Activated T-helper 1 cell treated with anti-CD3 and anti-CD28 coated beads, Interleukin-12 subunit alpha, Interleukin-12 subunit beta, Interleukin-2, Interleukin-4 antibody, amounts not matched to agents 30 ng/mL and 10 ng/mL and 1 ng/mL, durations not matched to agents 14 hours and 24 hours and 36 hours (primary cell): ENCODE measurements at regions of chr17 and their contacts with region 1.

Region 1: GRCh38 chr17:41918314-41919164 is at the start of gene ACLY:
- DNase-seq: peak; percentile 98
- H3K4me3 Mint-ChIP-seq: peak within 1 kb of the TSS; percentile 95
- H3K27ac Mint-ChIP-seq: peak within 1 kb of the TSS; percentile 90
- H3K4me1 Mint-ChIP-seq: peaks cover 32% of the 10 kb centered on the region
- H3K27me3 Mint-ChIP-seq: no peaks in the 10 kb centered on the region
- total RNA-seq, gene ACLY: 200 and 211 TPM in 2 replicates

Region 2: GRCh38 chr17:41688699-41689496 is 229.6 kb before region 1 on chr17 and contains the start of gene EIF1:
- intact Hi-C with region 1: loop called (anchors 2 kb)
- DNase-seq: peak; percentile 100
- H3K4me3 Mint-ChIP-seq: peak within 1 kb of the TSS; percentile 96
- H3K27ac Mint-ChIP-seq: peak within 1 kb of the TSS; percentile 96
- H3K4me1 Mint-ChIP-seq: peaks cover 29% of the 10 kb centered on the region
- H3K27me3 Mint-ChIP-seq: peaks cover 3% of the 10 kb centered on the region
- total RNA-seq, gene EIF1: 876 and 893 TPM in 2 replicates

Region 3: DNA sequence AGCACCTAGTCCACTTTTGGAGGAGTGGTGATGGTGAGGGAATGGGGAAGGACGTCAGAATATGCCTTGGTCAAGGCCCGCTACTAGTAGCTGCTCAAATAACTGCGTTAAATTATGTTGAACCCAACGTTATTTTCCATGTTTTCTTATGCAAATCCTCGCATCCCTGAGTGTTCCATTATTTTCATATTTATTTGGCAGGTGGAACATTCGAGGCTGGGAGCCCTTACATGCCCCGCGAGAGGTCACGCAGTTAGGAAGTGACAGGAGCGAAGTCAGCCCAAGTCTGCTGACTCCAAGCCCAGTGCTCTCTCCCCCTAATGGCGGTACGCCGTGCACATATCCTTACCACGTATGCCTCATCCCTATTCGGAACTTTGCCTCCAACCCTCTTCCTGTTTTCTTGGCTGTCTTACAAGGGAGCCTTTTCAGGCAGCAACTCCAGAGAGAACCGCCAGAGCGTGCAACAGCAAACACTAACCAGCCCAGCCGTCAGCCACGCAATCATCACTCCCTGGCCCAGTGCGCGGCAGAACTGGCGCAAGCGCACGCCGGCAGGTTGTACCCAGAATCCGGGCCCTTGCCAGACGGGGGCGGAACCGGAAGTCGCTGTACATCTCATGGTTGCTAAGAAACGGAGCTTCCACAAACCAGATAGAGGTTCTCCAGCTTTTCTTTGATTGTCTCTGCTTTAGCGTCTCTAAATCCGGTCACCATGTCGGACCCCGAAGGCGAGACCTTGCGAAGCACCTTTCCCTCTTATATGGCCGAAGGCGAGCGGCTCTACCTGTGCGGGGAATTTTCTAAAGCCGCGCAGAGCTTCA is 11.7 kb after region 1 on chr17 and contains the start of gene ODAD4:
- intact Hi-C with region 1: loop called (anchors 1 kb)
- DNase-seq: peak; percentile 95
- H3K4me3 Mint-ChIP-seq: peak within 1 kb of the TSS; percentile 97
- H3K27ac Mint-ChIP-seq: peak within 1 kb of the TSS; percentile 96
- H3K4me1 Mint-ChIP-seq: peaks cover 35% of the 10 kb centered on the region
- H3K27me3 Mint-ChIP-seq: no peaks in the 10 kb centered on the region
- total RNA-seq, gene ODAD4: 0.39 and 0.73 TPM in 2 replicates

Region 4: DNA sequence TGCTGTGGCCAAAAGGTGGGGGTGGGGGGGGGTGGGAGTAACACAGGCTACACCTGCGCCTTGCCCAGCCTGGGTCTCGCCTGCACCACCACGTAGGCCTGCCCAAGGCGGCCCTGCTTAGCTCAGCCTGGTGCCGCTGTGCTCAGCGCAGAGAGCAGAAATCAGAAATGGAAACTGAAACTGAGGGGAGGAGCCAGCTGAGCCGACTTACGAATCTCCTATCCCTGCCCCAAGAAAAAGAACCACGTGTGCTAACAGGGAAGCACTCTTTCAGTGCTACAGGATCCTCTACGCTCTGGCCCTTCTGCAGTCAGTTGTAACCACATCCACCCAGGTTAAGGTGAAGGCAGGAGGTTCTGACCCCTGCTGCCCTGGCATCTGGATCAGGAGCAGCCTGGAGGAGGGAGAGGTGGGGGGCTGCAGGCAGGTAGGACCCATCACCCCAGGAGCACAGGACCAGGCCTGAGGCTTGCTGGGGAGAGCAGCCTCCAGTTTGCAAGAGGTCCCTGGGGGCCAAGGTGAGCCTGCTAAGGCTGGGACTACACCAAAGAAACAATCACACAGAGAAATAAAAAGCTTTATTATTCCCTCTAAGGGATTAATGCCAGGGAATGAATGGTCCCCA is 194.1 kb after region 1 on chr17 and contains the start of gene DHX58:
- intact Hi-C with region 1: loop called (anchors 2 kb)
- DNase-seq: peak; percentile 83
- H3K4me3 Mint-ChIP-seq: peak within 1 kb of the TSS; percentile 85
- H3K27ac Mint-ChIP-seq: peak within 1 kb of the TSS; percentile 86
- H3K4me1 Mint-ChIP-seq: peaks cover 50% of the 10 kb centered on the region
- H3K27me3 Mint-ChIP-seq: no peaks in the 10 kb centered on the region
- total RNA-seq, gene DHX58: 26.9 and 28.4 TPM in 2 replicates